ENCODE measurements at regions of chr16 and their contacts with region 1.

Region 1: GRCh38 chr16:30628627-30629540 is 18.7 kb upstream of the ZNF689 start:
- DNase-seq: peak; percentile 75 to 90 (median 86)
- H3K4me3 ChIP-seq: no peak overlapping the region
- H3K27ac ChIP-seq: no peak overlapping the region
- H3K4me1 ChIP-seq: no peaks in the 10 kb centered on the region
- H3K27me3 ChIP-seq: no peaks in the 10 kb centered on the region
- CTCF ChIP-seq: peak; percentile 69 to 85 (median 79)
- EP300 ChIP-seq: no peak
- POLR2A ChIP-seq: no peak

Region 2: DNA sequence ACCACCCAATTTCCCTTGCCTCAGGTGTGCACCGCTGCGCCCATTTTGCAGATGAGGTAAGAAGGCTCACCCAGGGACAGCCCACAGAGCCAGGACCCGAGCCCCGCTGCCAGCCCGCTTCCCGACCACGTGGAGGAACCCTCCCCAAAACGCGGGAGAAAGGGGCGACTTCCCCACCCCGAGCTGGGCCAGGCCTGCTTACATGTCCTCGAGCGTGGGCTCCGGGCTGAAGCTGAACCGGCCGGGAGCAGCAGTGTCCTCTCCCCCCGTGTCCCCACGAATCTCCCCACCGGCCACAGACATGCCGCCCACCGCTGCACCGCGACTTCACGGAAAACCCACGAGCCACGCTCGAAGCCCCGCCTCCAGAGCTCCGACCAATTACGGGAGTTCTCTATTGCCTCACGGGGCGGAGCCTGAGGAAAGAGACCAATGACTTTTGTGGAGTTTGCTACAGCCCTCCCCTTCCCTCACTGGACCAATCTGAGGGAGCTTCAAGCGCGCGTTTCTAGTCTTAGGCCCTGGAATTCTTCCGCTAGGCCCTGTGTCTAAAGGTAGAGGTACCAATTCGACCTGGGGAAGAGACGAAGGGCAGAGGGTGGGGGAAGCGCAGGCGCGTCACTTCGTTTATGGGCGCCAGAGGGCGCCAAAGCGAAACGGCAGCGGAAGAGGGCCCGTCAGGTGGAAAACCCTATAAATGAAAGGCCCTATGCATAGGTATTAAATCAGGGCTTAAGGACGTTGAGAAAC is 199.0 kb before region 1 on chr16 and contains the start of gene DCTPP1:
- intact Hi-C with region 1: loop called in 1 of 4 experiments (anchors 10 kb)
- DNase-seq: peak; percentile 92 to 97 (median 94)
- H3K4me3 ChIP-seq: peak within 1 kb of the TSS; percentile 57
- H3K27ac ChIP-seq: peak within 1 kb of the TSS in 1 of 2 donors; percentile 71
- H3K4me1 ChIP-seq: peaks cover 7% of the 10 kb centered on the region
- H3K27me3 ChIP-seq: no peaks in the 10 kb centered on the region
- CTCF ChIP-seq: peak; percentile 61 to 91 (median 83)
- EP300 ChIP-seq: no peak
- POLR2A ChIP-seq: peak; percentile 22
- total RNA-seq, gene DCTPP1: 13.2 to 34.4 (median 22.9) TPM

Region 3: DNA sequence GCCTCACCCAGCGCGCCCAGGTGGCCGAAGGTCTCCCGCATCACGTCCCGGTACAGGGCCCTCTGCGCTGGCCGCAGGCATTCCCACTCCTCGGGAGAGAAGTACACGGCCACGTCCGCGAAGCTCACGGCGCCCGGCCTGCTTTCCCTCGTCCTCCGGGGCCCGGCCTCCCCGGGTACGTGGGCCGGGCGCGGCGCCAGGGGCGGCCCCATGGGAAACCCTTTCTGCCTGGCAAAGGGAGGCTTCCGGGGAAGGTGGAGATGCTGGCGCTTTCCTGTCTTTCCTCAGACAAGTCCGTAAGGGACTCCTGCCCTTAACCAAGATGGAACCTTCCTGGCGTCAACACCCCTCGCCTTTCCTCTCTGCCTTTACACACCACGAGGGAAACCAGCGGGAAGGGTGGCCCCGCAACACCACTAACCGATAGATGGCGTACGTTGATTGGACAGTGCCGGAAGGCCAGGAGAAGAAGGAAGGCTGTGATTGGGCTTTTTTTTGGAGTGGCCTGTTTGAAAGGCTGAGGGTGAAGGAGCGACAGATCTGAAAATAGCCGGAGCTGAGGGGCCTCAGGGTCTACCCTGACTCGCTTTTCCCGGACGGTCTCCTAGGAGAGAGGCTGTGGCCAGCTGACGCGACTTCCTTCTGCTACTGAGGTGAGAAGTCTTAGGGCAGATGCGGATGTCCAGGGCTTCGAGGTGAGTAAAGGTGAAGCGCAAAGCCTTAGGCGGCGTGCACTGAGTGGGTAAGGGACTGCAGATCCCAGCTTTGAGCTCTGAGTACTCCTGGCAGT is 43.3 kb before region 1 on chr16 and contains the start of gene ZNF785:
- intact Hi-C with region 1: loop called in 1 of 4 experiments (anchors 5 kb)
- DNase-seq: peak; percentile 94 to 98 (median 96)
- H3K4me3 ChIP-seq: peak within 1 kb of the TSS; percentile 70
- H3K27ac ChIP-seq: peak within 1 kb of the TSS; percentile 84 to 91
- H3K4me1 ChIP-seq: peaks cover 5% of the 10 kb centered on the region
- H3K27me3 ChIP-seq: no peaks in the 10 kb centered on the region
- CTCF ChIP-seq: peak in 2 of 3 donors; percentile 20 to 53
- EP300 ChIP-seq: no peak
- POLR2A ChIP-seq: peak; percentile 23
- total RNA-seq, gene ZNF785: 7.0 to 29.4 (median 22.2) TPM

Measured in ovary (tissue), 10 donors.